Activated CD4-positive, alpha-beta memory T cell treated with anti-CD3 and anti-CD28 coated beads for 36 hours (primary cell): ENCODE measurements at regions of chr17 and their contacts with region 1.

Region 1: GRCh38 chr17:42112552-42113176 is at the start of gene DHX58:
- DNase-seq: peak; percentile 89
- H3K4me3 Mint-ChIP-seq: peak within 1 kb of the TSS; percentile 78
- H3K27ac Mint-ChIP-seq: peak within 1 kb of the TSS; percentile 96
- H3K4me1 Mint-ChIP-seq: peaks cover 30% of the 10 kb centered on the region
- H3K27me3 Mint-ChIP-seq: no peaks in the 10 kb centered on the region
- total RNA-seq, gene DHX58: 38.1 to 38.4 TPM

Region 2: GRCh38 chr17:41885733-41886132 is 226.9 kb before region 1 on chr17:
- CTCF ChIA-PET with region 1: no interaction called
- POLR2A ChIA-PET with region 1: no interaction called
- intact Hi-C with region 1: no loop called
- DNase-seq: peak; percentile 12
- H3K4me3 Mint-ChIP-seq: no peak overlapping the region
- H3K27ac Mint-ChIP-seq: no peak overlapping the region
- H3K4me1 Mint-ChIP-seq: no peaks in the 10 kb centered on the region
- H3K27me3 Mint-ChIP-seq: no peaks in the 10 kb centered on the region

Region 3: DNA sequence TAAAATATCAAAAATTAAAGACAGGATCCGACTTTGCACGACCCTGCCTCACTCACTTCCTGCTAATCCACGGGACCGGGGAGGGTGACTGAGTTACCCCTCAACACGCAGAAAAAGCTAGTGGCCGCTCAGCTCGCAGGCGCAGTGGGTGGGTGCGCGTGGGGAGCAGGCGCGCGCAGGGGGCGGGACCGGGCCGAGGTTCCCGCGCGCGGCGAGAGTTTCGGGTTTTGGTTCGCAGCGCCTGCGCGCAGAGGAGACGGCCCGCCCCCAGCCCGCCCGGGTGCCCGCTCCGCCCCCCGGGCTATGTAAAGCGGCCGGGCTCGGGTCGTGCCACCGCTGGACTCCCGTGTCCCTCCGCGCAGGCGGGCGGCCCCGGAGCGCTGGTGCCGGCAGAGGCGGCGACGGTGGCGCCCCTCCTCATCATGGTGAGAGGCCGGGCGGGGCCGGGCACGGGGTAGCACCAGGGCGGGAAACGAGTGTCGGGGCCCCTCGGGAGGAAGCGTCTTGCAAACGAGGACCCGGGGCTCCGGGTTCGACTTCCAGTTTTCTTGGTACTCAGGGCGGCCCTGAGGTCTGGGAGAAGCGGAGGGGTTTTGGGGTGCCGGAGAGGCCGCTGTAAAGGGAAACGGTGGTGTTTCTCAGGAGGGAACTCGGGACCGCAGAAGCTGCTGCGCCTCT is 146.1 kb before region 1 on chr17 and contains the start of gene CNP:
- CTCF ChIA-PET with region 1: interaction called, 43 read pairs
- POLR2A ChIA-PET with region 1: interaction called, 21 read pairs
- intact Hi-C with region 1: loop called (anchors 1 kb)
- DNase-seq: peak; percentile 93
- H3K4me3 Mint-ChIP-seq: peak within 1 kb of the TSS; percentile 78
- H3K27ac Mint-ChIP-seq: peak within 1 kb of the TSS; percentile 83
- H3K4me1 Mint-ChIP-seq: peaks cover 40% of the 10 kb centered on the region
- H3K27me3 Mint-ChIP-seq: no peaks in the 10 kb centered on the region
- total RNA-seq, gene CNP: 66.6 to 68.0 TPM

Region 4: GRCh38 chr17:42027961-42028790 is 84.5 kb before region 1 on chr17:
- CTCF ChIA-PET with region 1: interaction called, 211 read pairs
- POLR2A ChIA-PET with region 1: interaction called, 4 read pairs
- intact Hi-C with region 1: loop called (anchors 1 kb)
- DNase-seq: no peak
- H3K4me3 Mint-ChIP-seq: no peak overlapping the region
- H3K27ac Mint-ChIP-seq: no peak overlapping the region
- H3K4me1 Mint-ChIP-seq: peaks cover 5% of the 10 kb centered on the region
- H3K27me3 Mint-ChIP-seq: no peaks in the 10 kb centered on the region

Region 5: GRCh38 chr17:42101513-42102319 is 10.9 kb before region 1 on chr17:
- CTCF ChIA-PET with region 1: interaction called, 22 read pairs
- POLR2A ChIA-PET with region 1: interaction called, 4 read pairs
- intact Hi-C with region 1: no loop called
- DNase-seq: peak; percentile 84
- H3K4me3 Mint-ChIP-seq: no peak overlapping the region
- H3K27ac Mint-ChIP-seq: no peak overlapping the region
- H3K4me1 Mint-ChIP-seq: peaks cover 8% of the 10 kb centered on the region
- H3K27me3 Mint-ChIP-seq: peaks cover 13% of the 10 kb centered on the region

Region 6: DNA sequence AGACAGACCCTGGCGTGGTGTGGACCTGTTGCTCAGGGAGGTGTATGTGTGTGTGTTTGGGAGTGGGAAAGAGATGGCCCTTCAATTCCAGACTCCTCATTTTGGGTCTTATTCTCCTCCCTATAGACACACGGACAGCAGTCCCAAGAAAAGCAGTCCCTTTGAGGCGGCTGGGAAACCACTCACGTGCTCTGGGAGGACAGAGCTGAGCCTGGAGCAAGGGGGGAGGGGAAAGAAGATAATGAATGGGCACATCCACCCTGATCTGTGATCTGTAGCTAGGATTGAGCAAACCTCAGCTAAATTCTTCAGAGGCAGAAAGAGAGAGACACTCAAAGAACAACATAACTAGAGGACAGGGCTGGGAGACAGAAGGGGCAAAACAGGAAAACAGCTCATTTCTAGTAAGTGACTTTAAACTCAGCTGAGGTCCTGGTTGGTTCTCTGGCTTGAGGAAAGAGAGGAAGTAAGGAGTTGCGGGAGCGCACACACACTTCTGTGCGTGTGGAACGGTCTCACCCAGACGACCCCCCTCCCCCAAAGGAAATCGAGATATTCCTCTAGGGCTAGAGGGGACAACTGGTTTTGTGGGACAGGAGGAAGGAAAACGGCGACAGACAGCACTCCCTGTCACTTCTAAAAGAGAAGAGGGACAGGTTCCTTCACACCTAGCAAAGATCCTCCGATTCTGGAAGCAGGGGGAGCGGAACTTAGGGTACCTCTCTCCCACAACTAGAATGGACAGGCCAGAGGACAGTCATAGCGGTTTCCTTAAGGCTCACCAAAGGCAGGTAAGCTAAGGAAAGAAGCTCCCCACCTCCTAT is 41.5 kb after region 1 on chr17:
- CTCF ChIA-PET with region 1: no interaction called
- POLR2A ChIA-PET with region 1: no interaction called
- intact Hi-C with region 1: loop called (anchors 5 kb)
- DNase-seq: peak; percentile 20
- H3K4me3 Mint-ChIP-seq: peak overlapping the region; percentile 86
- H3K27ac Mint-ChIP-seq: peak overlapping the region; percentile 80
- H3K4me1 Mint-ChIP-seq: peaks cover 34% of the 10 kb centered on the region
- H3K27me3 Mint-ChIP-seq: no peaks in the 10 kb centered on the region